ENCODE measurements at regions of chr2 and their contacts with region 1.

Region 1: GRCh38 chr2:179226203-179226960 is 38.2 kb downstream of the SESTD1 start:
- DNase-seq: no peak
- ATAC-seq: no peak
- H3K4me3 ChIP-seq: no peak overlapping the region
- H3K4me3 Mint-ChIP-seq: no peak overlapping the region
- H3K27ac ChIP-seq: no peak overlapping the region
- H3K27ac Mint-ChIP-seq: no peak overlapping the region
- H3K4me1 ChIP-seq: no peaks in the 10 kb centered on the region
- H3K4me1 Mint-ChIP-seq: no peaks in the 10 kb centered on the region
- H3K27me3 ChIP-seq: no peaks in the 10 kb centered on the region
- H3K27me3 Mint-ChIP-seq: no peaks in the 10 kb centered on the region
- CTCF ChIP-seq: no peak

Region 2: GRCh38 chr2:179239195-179239594 is 12.8 kb after region 1 on chr2:
- CTCF ChIA-PET with region 1: no interaction called
- POLR2A ChIA-PET with region 1: no interaction called
- intact Hi-C with region 1: no loop called
- DNase-seq: peak in 1 of 9 experiments; percentile 51
- ATAC-seq: peak; percentile 58
- H3K4me3 ChIP-seq: no peak overlapping the region
- H3K4me3 Mint-ChIP-seq: no peak overlapping the region
- H3K27ac ChIP-seq: no peak overlapping the region
- H3K27ac Mint-ChIP-seq: no peak overlapping the region
- H3K4me1 ChIP-seq: peaks cover 7% of the 10 kb centered on the region
- H3K4me1 Mint-ChIP-seq: peaks cover 20% of the 10 kb centered on the region
- H3K27me3 ChIP-seq: no peaks in the 10 kb centered on the region
- H3K27me3 Mint-ChIP-seq: peaks cover 2% of the 10 kb centered on the region
- CTCF ChIP-seq: no peak

Region 3: GRCh38 chr2:179936654-179937053 is 710.3 kb after region 1 on chr2:
- CTCF ChIA-PET with region 1: no interaction called
- POLR2A ChIA-PET with region 1: no interaction called
- intact Hi-C with region 1: loop called in 1 of 2 experiments (anchors 10 kb)
- DNase-seq: peak in 3 of 9 experiments; percentile 5 to 11 (median 6)
- ATAC-seq: no peak
- H3K4me3 ChIP-seq: no peak overlapping the region
- H3K4me3 Mint-ChIP-seq: no peak overlapping the region
- H3K27ac ChIP-seq: no peak overlapping the region
- H3K27ac Mint-ChIP-seq: no peak overlapping the region
- H3K4me1 ChIP-seq: no peaks in the 10 kb centered on the region
- H3K4me1 Mint-ChIP-seq: no peaks in the 10 kb centered on the region
- H3K27me3 ChIP-seq: no peaks in the 10 kb centered on the region
- H3K27me3 Mint-ChIP-seq: no peaks in the 10 kb centered on the region
- CTCF ChIP-seq: no peak

Measured in CD8-positive, alpha-beta T cell (primary cell).